HepG2 (cell line): ENCODE measurements at regions of chr2 and their contacts with region 1.

Region 1: GRCh38 chr2:11829947-11830707 is 83.7 kb downstream of the LPIN1 start:
- DNase-seq: peak; percentile 96
- ATAC-seq: peak; percentile 88
- H3K4me3 ChIP-seq: peak overlapping the region; percentile 55 to 77 (median 70)
- H3K27ac ChIP-seq: peak overlapping the region; percentile 80
- H3K4me1 ChIP-seq: peaks cover 60% of the 10 kb centered on the region
- H3K27me3 ChIP-seq: no peaks in the 10 kb centered on the region; a peak in 1 of 5 replicates
- CTCF ChIP-seq: peak; percentile 86
- EP300 ChIP-seq: peak in 1 of 2 experiments; percentile 84; a peak in 2 of 4 replicates
- POLR2A ChIP-seq: peak; percentile 64 to 65
- RAD21 ChIP-seq: no peak

Region 2: GRCh38 chr2:11796190-11797171 is 33.6 kb before region 1 on chr2:
- CTCF ChIA-PET with region 1: no interaction called
- POLR2A ChIA-PET with region 1: no interaction called
- in situ Hi-C with region 1: no loop called
- intact Hi-C with region 1: no loop called
- DNase-seq: no peak
- ATAC-seq: no peak
- H3K4me3 ChIP-seq: no peak overlapping the region
- H3K27ac ChIP-seq: no peak overlapping the region
- H3K4me1 ChIP-seq: no peaks in the 10 kb centered on the region
- H3K27me3 ChIP-seq: no peaks in the 10 kb centered on the region
- CTCF ChIP-seq: no peak
- EP300 ChIP-seq: no peak
- POLR2A ChIP-seq: no peak
- RAD21 ChIP-seq: no peak

Region 3: GRCh38 chr2:11863513-11864328 is 33.6 kb after region 1 on chr2:
- CTCF ChIA-PET with region 1: interaction called, 3 read pairs
- POLR2A ChIA-PET with region 1: no interaction called
- in situ Hi-C with region 1: no loop called
- intact Hi-C with region 1: loop called (anchors 1 kb)
- DNase-seq: peak; percentile 86
- ATAC-seq: peak; percentile 96
- H3K4me3 ChIP-seq: no peak overlapping the region
- H3K27ac ChIP-seq: no peak overlapping the region
- H3K4me1 ChIP-seq: peaks cover 15% of the 10 kb centered on the region; the same call in 1 of the 2 replicates
- H3K27me3 ChIP-seq: peaks cover 0 to 20% of the 10 kb centered on the region in 2 experiments; a peak in 2 of 5 replicates
- CTCF ChIP-seq: peak; percentile 97
- EP300 ChIP-seq: no peak
- POLR2A ChIP-seq: no peak
- RAD21 ChIP-seq: peak; percentile 77

Region 4: GRCh38 chr2:12169721-12170120 is 339.6 kb after region 1 on chr2:
- CTCF ChIA-PET with region 1: no interaction called
- POLR2A ChIA-PET with region 1: no interaction called
- in situ Hi-C with region 1: no loop called
- intact Hi-C with region 1: loop called (anchors 1 kb)
- DNase-seq: no peak
- ATAC-seq: no peak
- H3K4me3 ChIP-seq: no peak overlapping the region
- H3K27ac ChIP-seq: no peak overlapping the region
- H3K4me1 ChIP-seq: no peaks in the 10 kb centered on the region
- H3K27me3 ChIP-seq: no peaks in the 10 kb centered on the region
- CTCF ChIP-seq: no peak
- EP300 ChIP-seq: no peak
- POLR2A ChIP-seq: no peak
- RAD21 ChIP-seq: no peak

Region 5: GRCh38 chr2:12716282-12717190 is 886.4 kb after region 1 on chr2 and contains the start of gene TRIB2:
- CTCF ChIA-PET with region 1: no interaction called
- POLR2A ChIA-PET with region 1: no interaction called
- in situ Hi-C with region 1: loop called (anchors 5 kb)
- intact Hi-C with region 1: loop called (anchors 2 kb)
- DNase-seq: peak; percentile 41
- ATAC-seq: peak; percentile 82
- H3K4me3 ChIP-seq: peak within 1 kb of the TSS; percentile 53 to 71 (median 55)
- H3K27ac ChIP-seq: no peak within 1 kb of the TSS
- H3K4me1 ChIP-seq: peaks cover 25% of the 10 kb centered on the region
- H3K27me3 ChIP-seq: peaks cover 6 to 45% of the 10 kb centered on the region in 2 experiments
- CTCF ChIP-seq: peak; percentile 48
- EP300 ChIP-seq: no peak
- POLR2A ChIP-seq: no peak
- RAD21 ChIP-seq: 0 out of 2 replicates have a peak, but pooled peaks have one; percentile 11
- total RNA-seq, gene TRIB2: 1.3 and 2.3 TPM in 2 replicates

Region 6: GRCh38 chr2:13006829-13007717 is 1176.9 kb after region 1 on chr2:
- CTCF ChIA-PET with region 1: interaction called, 13 read pairs
- POLR2A ChIA-PET with region 1: no interaction called
- in situ Hi-C with region 1: loop called (anchors 10 kb)
- intact Hi-C with region 1: loop called (anchors 1 kb)
- DNase-seq: peak; percentile 62
- ATAC-seq: peak; percentile 98
- H3K4me3 ChIP-seq: no peak overlapping the region
- H3K27ac ChIP-seq: no peak overlapping the region
- H3K4me1 ChIP-seq: no peaks in the 10 kb centered on the region
- H3K27me3 ChIP-seq: no peaks in the 10 kb centered on the region
- CTCF ChIP-seq: peak; percentile 88
- EP300 ChIP-seq: no peak
- POLR2A ChIP-seq: no peak
- RAD21 ChIP-seq: peak; percentile 74